Colonic mucosa (tissue), 4 donors: ENCODE measurements at regions of chr11 and their contacts with region 1.

Region 1: GRCh38 chr11:57800444-57801182 is 39.0 kb downstream of the CTNND1 start:
- DNase-seq: peak; percentile 48
- H3K4me3 ChIP-seq: no peak overlapping the region
- H3K27ac ChIP-seq: peak overlapping the region; percentile 86
- H3K4me1 ChIP-seq: peaks cover 21% of the 10 kb centered on the region
- H3K27me3 ChIP-seq: no peaks in the 10 kb centered on the region
- CTCF ChIP-seq: peak; percentile 84

Region 2: DNA sequence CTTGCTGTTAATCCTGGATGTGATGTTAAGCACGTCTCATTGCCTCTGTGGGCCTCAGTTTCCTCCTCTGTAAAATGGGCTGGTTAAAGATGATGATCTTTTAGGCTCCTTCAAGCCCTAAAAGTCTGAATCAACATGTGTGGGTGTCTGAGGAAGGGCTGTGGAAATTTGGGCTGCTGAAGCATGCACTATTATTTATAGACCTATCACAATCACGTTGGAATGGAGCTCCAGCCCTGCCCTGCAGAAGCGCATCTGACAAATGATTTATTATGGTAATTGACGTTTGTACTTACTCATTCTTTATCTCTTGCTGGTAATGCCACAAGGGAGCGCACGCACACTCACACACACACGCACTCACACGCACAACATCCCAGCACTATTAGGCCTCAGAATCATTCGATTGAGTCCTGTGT is 442.1 kb before region 1 on chr11:
- intact Hi-C with region 1: no loop called
- DNase-seq: no peak
- H3K4me3 ChIP-seq: no peak overlapping the region
- H3K27ac ChIP-seq: no peak overlapping the region
- H3K4me1 ChIP-seq: no peaks in the 10 kb centered on the region
- H3K27me3 ChIP-seq: no peaks in the 10 kb centered on the region
- CTCF ChIP-seq: no peak

Region 3: GRCh38 chr11:57567515-57568329 is 232.9 kb before region 1 on chr11 and contains the start of gene UBE2L6:
- intact Hi-C with region 1: loop called (anchors 10 kb)
- DNase-seq: peak; percentile 74
- H3K4me3 ChIP-seq: peak within 1 kb of the TSS; percentile 84
- H3K27ac ChIP-seq: peak within 1 kb of the TSS; percentile 84
- H3K4me1 ChIP-seq: no peaks in the 10 kb centered on the region
- H3K27me3 ChIP-seq: no peaks in the 10 kb centered on the region
- CTCF ChIP-seq: no peak
- total RNA-seq, gene UBE2L6: 28.3 to 35.3 TPM

Region 4: GRCh38 chr11:57641011-57641807 is 159.4 kb before region 1 on chr11:
- intact Hi-C with region 1: no loop called
- DNase-seq: no peak
- H3K4me3 ChIP-seq: no peak overlapping the region
- H3K27ac ChIP-seq: no peak overlapping the region
- H3K4me1 ChIP-seq: no peaks in the 10 kb centered on the region
- H3K27me3 ChIP-seq: peaks cover 3% of the 10 kb centered on the region
- CTCF ChIP-seq: peak; percentile 13

Region 5: GRCh38 chr11:57751676-57752253 is 48.8 kb before region 1 on chr11 and contains the start of gene BTBD18:
- intact Hi-C with region 1: loop called (anchors 5 kb)
- DNase-seq: peak; percentile 55
- H3K4me3 ChIP-seq: no peak within 1 kb of the TSS
- H3K27ac ChIP-seq: no peak within 1 kb of the TSS
- H3K4me1 ChIP-seq: no peaks in the 10 kb centered on the region
- H3K27me3 ChIP-seq: no peaks in the 10 kb centered on the region
- CTCF ChIP-seq: peak; percentile 54
- total RNA-seq, gene BTBD18: not detected

Region 6: GRCh38 chr11:57761301-57762234 is 39.0 kb before region 1 on chr11 and contains the start of gene CTNND1:
- intact Hi-C with region 1: loop called (anchors 5 kb)
- DNase-seq: peak; percentile 92
- H3K4me3 ChIP-seq: peak within 1 kb of the TSS; percentile 46
- H3K27ac ChIP-seq: peak within 1 kb of the TSS; percentile 89
- H3K4me1 ChIP-seq: peaks cover 8% of the 10 kb centered on the region
- H3K27me3 ChIP-seq: no peaks in the 10 kb centered on the region
- CTCF ChIP-seq: no peak
- total RNA-seq, gene CTNND1: 375 to 416 TPM

Region 7: GRCh38 chr11:58513747-58514367 is 713.2 kb after region 1 on chr11:
- intact Hi-C with region 1: loop called (anchors 10 kb)
- DNase-seq: peak; percentile 25
- H3K4me3 ChIP-seq: no peak overlapping the region
- H3K27ac ChIP-seq: no peak overlapping the region
- H3K4me1 ChIP-seq: no peaks in the 10 kb centered on the region
- H3K27me3 ChIP-seq: no peaks in the 10 kb centered on the region
- CTCF ChIP-seq: peak; percentile 43